Activated B cell treated with CpG ODN at 0.5 μM for 24 hours (primary cell): ENCODE measurements at regions of chr4 and their contacts with region 1.

Region 1: DNA sequence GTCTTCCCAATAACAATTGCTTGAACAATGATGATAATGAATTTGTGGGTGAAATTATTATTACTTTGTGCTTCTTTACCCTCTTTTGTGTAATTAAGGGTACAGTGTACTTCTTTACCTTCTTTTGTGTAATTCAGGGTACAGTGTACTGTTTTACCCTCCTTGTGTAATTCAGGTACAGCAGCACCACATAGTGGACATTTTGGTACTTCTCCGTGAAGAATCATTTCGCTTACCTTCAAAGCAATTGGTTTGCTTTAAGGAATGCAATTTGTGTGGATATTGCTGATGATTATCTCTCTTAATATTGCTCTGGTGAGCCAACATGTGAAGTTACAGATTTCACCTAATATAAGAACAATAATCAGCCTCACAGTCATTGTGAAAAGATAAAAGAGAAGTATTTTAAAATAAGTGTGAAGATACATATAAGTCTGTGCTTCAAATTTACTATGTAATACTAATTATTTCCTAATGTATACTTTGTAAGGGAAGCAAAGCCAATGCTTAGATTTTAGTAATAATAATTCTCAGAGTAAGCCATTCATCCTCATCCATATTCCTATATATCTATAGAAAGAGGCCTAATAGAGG is 27.2 kb upstream of the SEC24B start:
- DNase-seq: no peak
- ATAC-seq: no peak
- H3K4me3 Mint-ChIP-seq: no peak overlapping the region
- H3K27ac Mint-ChIP-seq: no peak overlapping the region
- H3K4me1 Mint-ChIP-seq: no peaks in the 10 kb centered on the region
- H3K27me3 Mint-ChIP-seq: no peaks in the 10 kb centered on the region
- CTCF ChIP-seq: no peak

Region 2: GRCh38 chr4:107757864-107758476 is 1648.5 kb before region 1 on chr4:
- CTCF ChIA-PET with region 1: no interaction called
- POLR2A ChIA-PET with region 1: no interaction called
- intact Hi-C with region 1: loop called (anchors 5 kb)
- DNase-seq: no peak
- ATAC-seq: no peak
- H3K4me3 Mint-ChIP-seq: no peak overlapping the region
- H3K27ac Mint-ChIP-seq: no peak overlapping the region
- H3K4me1 Mint-ChIP-seq: peaks cover 10% of the 10 kb centered on the region
- H3K27me3 Mint-ChIP-seq: peaks cover 4% of the 10 kb centered on the region
- CTCF ChIP-seq: no peak

Region 3: DNA sequence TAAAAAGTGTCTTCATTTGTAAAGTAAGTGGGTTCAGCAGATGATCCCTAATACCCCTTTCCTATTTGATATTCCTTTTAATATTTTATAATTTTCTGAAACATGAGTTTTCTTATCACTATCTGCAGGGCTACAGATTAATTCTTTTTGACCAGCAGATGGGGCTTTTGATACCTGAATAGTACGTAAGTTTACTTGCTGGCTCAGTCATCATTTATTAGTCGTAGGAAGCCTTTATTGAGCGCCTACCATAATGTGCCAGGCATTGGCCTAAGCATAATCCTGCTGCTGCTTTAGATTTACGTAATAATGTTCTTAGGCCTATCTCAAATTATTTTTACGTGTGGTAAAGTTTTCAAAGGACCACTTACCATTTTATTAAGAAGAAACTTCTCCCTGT is 723.0 kb before region 1 on chr4:
- CTCF ChIA-PET with region 1: no interaction called
- POLR2A ChIA-PET with region 1: no interaction called
- intact Hi-C with region 1: loop called (anchors 1 kb)
- DNase-seq: no peak
- ATAC-seq: no peak
- H3K4me3 Mint-ChIP-seq: no peak overlapping the region
- H3K27ac Mint-ChIP-seq: no peak overlapping the region
- H3K4me1 Mint-ChIP-seq: no peaks in the 10 kb centered on the region
- H3K27me3 Mint-ChIP-seq: peaks cover 3% of the 10 kb centered on the region
- CTCF ChIP-seq: no peak

Region 4: GRCh38 chr4:108834835-108835384 is 571.5 kb before region 1 on chr4:
- CTCF ChIA-PET with region 1: no interaction called
- POLR2A ChIA-PET with region 1: no interaction called
- intact Hi-C with region 1: loop called (anchors 10 kb)
- DNase-seq: no peak
- ATAC-seq: no peak
- H3K4me3 Mint-ChIP-seq: no peak overlapping the region
- H3K27ac Mint-ChIP-seq: no peak overlapping the region
- H3K4me1 Mint-ChIP-seq: no peaks in the 10 kb centered on the region
- H3K27me3 Mint-ChIP-seq: peaks cover 2% of the 10 kb centered on the region
- CTCF ChIP-seq: no peak